AG04450 (cell line): ENCODE measurements at regions of chr9 and their contacts with region 1.

Region 1: DNA sequence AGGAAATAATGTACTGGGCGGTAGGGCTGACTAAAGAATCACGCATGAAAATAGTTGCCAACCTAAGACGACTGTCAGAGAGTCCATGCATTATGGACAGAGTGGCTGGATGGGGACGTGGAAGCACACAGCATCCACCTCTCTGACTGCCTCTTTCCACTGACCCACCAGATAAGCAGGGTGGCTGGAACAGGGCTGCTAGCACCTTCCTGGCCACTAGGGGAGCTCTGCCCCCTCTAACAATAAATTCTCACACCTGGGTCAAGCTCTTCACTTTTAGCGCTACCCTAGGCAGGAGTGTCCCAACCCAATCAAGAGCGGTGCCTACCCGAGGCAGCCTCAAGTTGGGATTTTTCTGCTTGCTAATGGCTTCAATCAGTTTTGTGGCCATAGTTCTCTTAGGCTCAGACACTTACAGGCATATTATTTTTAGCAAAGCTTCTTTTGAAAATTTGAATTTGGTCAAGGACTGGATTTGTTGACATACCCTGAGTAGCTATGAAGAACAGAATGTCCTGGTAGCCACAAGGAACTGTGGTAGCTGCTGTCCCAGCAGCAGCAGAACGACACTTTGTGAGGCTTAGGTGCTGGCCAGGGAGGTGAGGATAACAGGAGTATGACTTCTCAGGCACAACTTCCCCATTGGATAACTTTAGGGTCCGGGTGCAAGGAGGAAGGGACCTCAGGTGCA is 6.9 kb upstream of the TPM2 start:
- DNase-seq: no peak
- H3K4me3 ChIP-seq: no peak overlapping the region
- H3K27ac ChIP-seq: no peak overlapping the region
- H3K27me3 ChIP-seq: no peaks in the 10 kb centered on the region
- CTCF ChIP-seq: peak; percentile 86

Region 2: GRCh38 chr9:35716230-35716629 is 19.6 kb after region 1 on chr9:
- CTCF ChIA-PET with region 1: interaction called, 48 read pairs
- POLR2A ChIA-PET with region 1: interaction called, 9 read pairs
- DNase-seq: no peak
- H3K4me3 ChIP-seq: no peak overlapping the region
- H3K27ac ChIP-seq: peak overlapping the region; percentile 21
- H3K27me3 ChIP-seq: no peaks in the 10 kb centered on the region
- CTCF ChIP-seq: 0 out of 2 replicates have a peak, but pooled peaks have one; percentile 12